ENCODE measurements at regions of chr22 and their contacts with region 1.

Region 1: DNA sequence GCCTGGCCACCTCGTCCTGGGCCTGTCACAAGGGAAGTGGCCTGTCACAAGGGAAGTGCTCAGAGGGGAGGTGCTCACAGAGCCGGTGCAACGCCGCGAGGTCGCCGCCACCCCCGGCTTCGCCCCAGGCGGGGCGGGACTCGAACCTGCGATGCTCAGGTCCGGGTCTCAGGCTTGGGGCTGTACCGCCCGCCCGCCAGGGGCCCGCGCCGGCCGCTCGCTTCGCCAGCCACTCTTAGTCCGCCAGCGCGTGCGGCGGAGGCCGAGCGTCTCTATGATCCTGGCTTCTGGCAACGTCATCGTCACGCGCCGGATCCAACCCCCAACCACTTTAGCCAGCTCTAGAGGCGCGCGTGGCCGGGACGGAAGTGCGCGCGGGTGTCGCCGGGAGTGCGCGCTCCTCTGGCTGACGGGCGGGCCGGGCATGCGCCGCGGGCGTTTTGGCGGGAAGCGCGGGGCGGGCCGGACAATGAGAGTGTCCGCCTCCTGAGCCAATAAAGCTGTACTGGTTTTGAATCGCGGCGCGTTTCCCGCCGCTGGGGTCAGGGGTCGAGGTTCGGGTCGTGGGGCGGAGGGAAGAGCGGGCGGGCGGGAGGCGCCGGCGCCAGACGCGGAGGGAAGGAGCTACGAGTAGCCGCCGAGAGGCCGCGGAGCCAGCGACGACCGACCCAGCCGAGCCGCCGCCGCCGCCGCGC is at the start of gene TRMT2A:
- DNase-seq: peak; percentile 98
- H3K4me3 Mint-ChIP-seq: peak within 1 kb of the TSS; percentile 91
- H3K27ac Mint-ChIP-seq: peak within 1 kb of the TSS; percentile 94
- H3K4me1 Mint-ChIP-seq: peaks cover 49% of the 10 kb centered on the region
- H3K27me3 Mint-ChIP-seq: no peaks in the 10 kb centered on the region
- total RNA-seq, gene TRMT2A: 51.8 to 57.9 TPM

Region 2: GRCh38 chr22:19854778-19855503 is 262.2 kb before region 1 on chr22 and contains the starts of genes GNB1L and RTL10:
- CTCF ChIA-PET with region 1: no interaction called
- intact Hi-C with region 1: loop called (anchors 10 kb)
- DNase-seq: peak; percentile 96
- H3K4me3 Mint-ChIP-seq: peak within 1 kb of the TSS; percentile 95
- H3K27ac Mint-ChIP-seq: peak within 1 kb of the TSS; percentile 98
- H3K4me1 Mint-ChIP-seq: peaks cover 53% of the 10 kb centered on the region
- H3K27me3 Mint-ChIP-seq: no peaks in the 10 kb centered on the region
- total RNA-seq, gene GNB1L: 8.8 to 9.8 TPM
- total RNA-seq, gene RTL10: 10.9 to 11.9 TPM

Region 3: DNA sequence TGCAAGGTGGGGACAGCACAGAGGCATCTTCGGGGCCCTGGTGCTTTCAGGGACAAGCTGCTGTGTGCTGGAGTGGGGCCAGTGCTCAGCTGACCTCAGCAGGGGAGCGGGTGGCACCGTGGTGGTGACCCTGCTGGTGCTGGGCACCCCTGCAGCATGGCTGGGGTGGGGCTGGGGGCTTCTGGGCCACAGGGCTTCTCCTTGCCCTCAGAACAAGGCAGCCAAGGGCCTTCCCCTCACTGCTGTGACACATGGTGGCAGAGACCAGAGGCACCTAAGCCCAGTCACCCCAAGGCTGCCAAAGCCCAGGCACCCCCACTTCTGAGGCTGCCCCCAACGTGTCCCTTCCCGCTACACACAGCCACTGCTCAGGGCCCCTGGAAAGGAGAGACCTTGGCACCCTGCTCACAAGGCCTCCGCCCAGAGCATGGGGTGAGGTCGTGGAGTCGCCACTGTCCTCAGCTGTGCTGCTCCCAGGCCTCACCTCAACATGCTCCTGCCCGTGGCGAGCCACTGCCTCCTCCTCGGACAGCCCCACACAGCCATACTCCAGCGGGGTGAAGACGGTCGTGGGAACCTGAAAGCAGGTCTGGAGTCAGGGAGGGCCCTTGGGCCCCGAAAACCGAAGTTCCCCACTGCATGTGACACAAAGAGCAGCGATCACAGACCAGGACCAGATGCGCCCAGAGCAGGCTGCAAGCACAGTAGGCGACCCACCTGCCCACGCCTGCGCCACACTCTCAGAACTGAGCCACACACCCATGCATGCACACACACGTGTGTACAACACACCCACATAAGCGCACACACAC is 237.2 kb before region 1 on chr22:
- CTCF ChIA-PET with region 1: no interaction called
- intact Hi-C with region 1: no loop called
- DNase-seq: peak; percentile 2
- H3K4me3 Mint-ChIP-seq: no peak overlapping the region
- H3K27ac Mint-ChIP-seq: no peak overlapping the region
- H3K4me1 Mint-ChIP-seq: peaks cover 5% of the 10 kb centered on the region
- H3K27me3 Mint-ChIP-seq: no peaks in the 10 kb centered on the region

Region 4: GRCh38 chr22:20016734-20017621 is 100.1 kb before region 1 on chr22 and contains the start of gene ARVCF:
- CTCF ChIA-PET with region 1: no interaction called
- intact Hi-C with region 1: loop called (anchors 1 kb)
- DNase-seq: peak; percentile 90
- H3K4me3 Mint-ChIP-seq: peak within 1 kb of the TSS; percentile 84
- H3K27ac Mint-ChIP-seq: no peak within 1 kb of the TSS
- H3K4me1 Mint-ChIP-seq: peaks cover 17% of the 10 kb centered on the region
- H3K27me3 Mint-ChIP-seq: peaks cover 11% of the 10 kb centered on the region
- total RNA-seq, gene ARVCF: 2.0 to 2.6 TPM

Region 5: GRCh38 chr22:20079745-20080444 is 37.2 kb before region 1 on chr22 and contains the start of gene DGCR8:
- CTCF ChIA-PET with region 1: no interaction called
- intact Hi-C with region 1: loop called (anchors 1 kb)
- DNase-seq: peak; percentile 68
- H3K4me3 Mint-ChIP-seq: peak within 1 kb of the TSS; percentile 90
- H3K27ac Mint-ChIP-seq: peak within 1 kb of the TSS; percentile 87
- H3K4me1 Mint-ChIP-seq: peaks cover 41% of the 10 kb centered on the region
- H3K27me3 Mint-ChIP-seq: no peaks in the 10 kb centered on the region
- total RNA-seq, gene DGCR8: 29.8 to 36.5 TPM

Region 6: GRCh38 chr22:20130739-20131596 is 13.9 kb after region 1 on chr22:
- CTCF ChIA-PET with region 1: interaction called, 11 read pairs
- intact Hi-C with region 1: loop called (anchors 2 kb)
- DNase-seq: peak; percentile 67
- H3K4me3 Mint-ChIP-seq: peak overlapping the region; percentile 62
- H3K27ac Mint-ChIP-seq: no peak overlapping the region
- H3K4me1 Mint-ChIP-seq: peaks cover 25% of the 10 kb centered on the region
- H3K27me3 Mint-ChIP-seq: no peaks in the 10 kb centered on the region

Region 7: DNA sequence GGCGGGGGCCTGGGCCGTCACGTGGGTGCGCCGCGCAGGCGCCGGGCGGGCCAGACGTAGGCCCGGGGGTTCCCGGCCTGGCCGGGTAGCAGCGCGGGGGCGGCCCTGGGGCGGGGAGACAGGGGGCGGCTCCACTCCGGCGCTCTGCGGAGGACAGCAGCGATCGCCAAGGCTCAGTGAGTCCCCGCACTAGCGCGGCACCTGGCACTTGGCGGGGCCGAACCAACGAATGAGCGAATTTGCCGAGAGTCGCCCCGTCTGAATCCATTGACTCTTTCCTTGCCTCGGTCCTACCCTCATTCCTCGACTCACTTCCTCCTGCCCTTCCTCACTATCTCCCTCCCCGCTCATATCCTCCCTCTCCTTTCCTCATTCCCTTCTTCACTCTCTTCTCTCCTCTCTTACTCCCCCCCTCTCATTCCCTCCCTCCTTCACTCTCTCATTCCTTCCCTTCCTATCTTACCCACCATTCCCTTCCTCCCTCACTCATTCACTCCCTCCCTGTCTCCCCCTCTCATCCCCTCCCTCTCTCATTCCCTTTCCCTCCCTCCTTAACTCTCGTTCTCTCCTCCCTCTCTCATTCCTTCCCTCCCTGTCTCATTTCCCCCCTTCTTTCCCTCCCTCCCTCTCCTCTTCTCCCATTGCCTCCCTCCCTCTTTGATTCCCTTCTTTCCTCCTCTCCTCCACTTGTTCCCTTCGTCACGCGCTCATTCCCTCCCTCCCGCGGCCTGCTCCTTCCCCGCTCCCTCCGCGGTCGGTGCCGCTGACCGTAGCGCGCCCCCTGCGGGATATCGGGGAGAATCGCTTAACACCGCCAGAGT is 379.0 kb after region 1 on chr22:
- CTCF ChIA-PET with region 1: no interaction called
- intact Hi-C with region 1: loop called (anchors 5 kb)
- DNase-seq: peak; percentile 92
- H3K4me3 Mint-ChIP-seq: peak overlapping the region; percentile 90
- H3K27ac Mint-ChIP-seq: peak overlapping the region; percentile 81
- H3K4me1 Mint-ChIP-seq: peaks cover 35% of the 10 kb centered on the region
- H3K27me3 Mint-ChIP-seq: no peaks in the 10 kb centered on the region

Region 8: DNA sequence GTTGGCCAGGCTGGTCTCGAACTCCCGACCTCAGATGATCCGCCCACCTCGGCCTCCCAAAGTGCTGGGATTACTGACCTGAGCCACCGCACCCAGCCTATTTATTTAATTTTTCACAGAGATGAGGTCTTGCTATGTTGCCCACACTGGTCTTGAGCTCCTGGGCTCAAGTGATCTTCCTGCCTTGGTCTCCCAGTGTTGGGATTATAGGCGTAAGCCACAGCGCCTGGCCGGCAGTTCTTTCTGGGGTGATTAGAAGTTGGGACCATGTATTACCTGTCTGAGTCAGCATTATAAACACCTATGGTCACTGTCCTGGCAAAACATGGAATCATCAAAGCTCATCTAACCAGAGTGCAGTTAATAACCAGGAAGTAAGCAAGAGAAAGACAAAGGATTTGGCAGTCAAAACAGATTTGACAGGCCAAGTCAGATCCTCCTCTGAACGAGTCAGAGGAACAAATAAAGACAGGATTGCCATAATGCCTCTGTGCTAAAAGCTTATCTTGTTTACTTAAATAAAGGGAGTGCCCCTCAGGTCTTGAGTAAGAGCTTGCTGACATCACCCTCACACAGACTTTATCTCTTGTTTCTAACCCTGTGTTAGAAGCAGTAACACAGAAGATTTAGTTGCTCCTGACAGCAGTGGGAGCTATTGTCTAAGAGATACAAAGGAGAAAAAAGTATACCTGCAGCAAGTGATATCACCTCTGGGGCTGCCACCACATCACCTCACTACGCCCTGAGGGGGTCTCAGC is 660.5 kb after region 1 on chr22:
- CTCF ChIA-PET with region 1: no interaction called
- intact Hi-C with region 1: no loop called
- DNase-seq: peak; percentile 18
- H3K4me3 Mint-ChIP-seq: no peak overlapping the region
- H3K27ac Mint-ChIP-seq: peak overlapping the region; percentile 41
- H3K4me1 Mint-ChIP-seq: peaks cover 7% of the 10 kb centered on the region
- H3K27me3 Mint-ChIP-seq: no peaks in the 10 kb centered on the region